K562 (cell line): ENCODE measurements at regions of chr6 and their contacts with region 1.

Region 1: GRCh38 chr6:118565311-118565960 is 17.3 kb downstream of the PLN start:
- DNase-seq: peak; percentile 16 to 44 (median 18)
- ATAC-seq: peak; percentile 90
- H3K4me3 ChIP-seq: no peak overlapping the region
- H3K27ac ChIP-seq: no peak overlapping the region
- H3K4me1 ChIP-seq: no peaks in the 10 kb centered on the region; a peak in 1 of 5 replicates
- H3K27me3 ChIP-seq: no peaks in the 10 kb centered on the region
- CTCF ChIP-seq: peak in 2 of 3 experiments; percentile 55 to 66; a peak in 4 of 6 replicates
- EP300 ChIP-seq: no peak
- POLR2A ChIP-seq: no peak
- RAD21 ChIP-seq: peak; percentile 47 to 87; a peak in 3 of 4 replicates

Region 2: GRCh38 chr6:118495485-118496280 is 69.8 kb before region 1 on chr6:
- CTCF ChIA-PET with region 1: no interaction called
- POLR2A ChIA-PET with region 1: no interaction called
- in situ Hi-C with region 1: no loop called
- intact Hi-C with region 1: no loop called
- DNase-seq: no peak
- ATAC-seq: no peak
- H3K4me3 ChIP-seq: no peak overlapping the region
- H3K27ac ChIP-seq: no peak overlapping the region
- H3K4me1 ChIP-seq: no peaks in the 10 kb centered on the region
- H3K27me3 ChIP-seq: no peaks in the 10 kb centered on the region
- CTCF ChIP-seq: no peak
- EP300 ChIP-seq: no peak
- POLR2A ChIP-seq: no peak
- RAD21 ChIP-seq: no peak

Region 3: DNA sequence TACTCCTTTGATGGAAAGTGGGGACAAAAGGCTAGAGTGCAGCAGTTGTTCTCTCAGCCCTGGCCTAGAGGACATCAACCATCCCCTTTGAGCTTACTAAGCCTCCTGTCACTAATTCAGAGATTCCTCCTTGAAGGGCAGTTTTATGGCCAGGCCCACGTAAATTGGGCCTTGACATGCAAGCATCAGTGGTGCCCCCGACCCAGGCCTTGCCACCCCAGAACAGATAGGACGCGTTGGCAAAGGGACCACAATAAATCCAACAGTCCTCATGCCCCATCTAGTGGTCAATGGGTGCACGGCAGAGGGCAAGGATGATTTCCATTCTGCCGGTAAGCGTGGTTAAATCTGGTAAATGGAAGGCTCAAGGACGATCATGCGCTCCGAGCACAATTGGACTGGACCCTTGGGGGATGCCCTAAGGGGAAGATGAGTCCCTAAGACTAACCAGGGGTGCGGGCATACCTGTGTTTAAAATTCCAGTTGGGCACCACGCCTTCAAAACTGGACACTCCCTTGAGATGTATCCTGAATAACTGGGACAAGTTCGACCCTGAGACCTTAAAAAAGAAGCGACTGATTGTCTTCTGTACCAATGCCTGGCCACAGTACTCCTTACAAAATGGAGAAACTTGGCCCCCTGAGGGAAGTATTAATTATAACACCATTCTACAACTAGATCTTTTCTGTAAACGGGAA is 53.4 kb after region 1 on chr6:
- CTCF ChIA-PET with region 1: no interaction called
- POLR2A ChIA-PET with region 1: no interaction called
- in situ Hi-C with region 1: no loop called
- intact Hi-C with region 1: loop called (anchors 1 kb)
- DNase-seq: peak; percentile 32 to 59 (median 39)
- ATAC-seq: peak; percentile 90
- H3K4me3 ChIP-seq: no peak overlapping the region
- H3K27ac ChIP-seq: no peak overlapping the region
- H3K4me1 ChIP-seq: peaks cover 0 to 7% of the 10 kb centered on the region in 2 experiments; a peak in 3 of 5 replicates
- H3K27me3 ChIP-seq: no peaks in the 10 kb centered on the region
- CTCF ChIP-seq: peak; percentile 80 to 92 (median 80)
- EP300 ChIP-seq: no peak
- POLR2A ChIP-seq: no peak
- RAD21 ChIP-seq: peak; percentile 75 to 82

Region 4: GRCh38 chr6:118724211-118724610 is 158.8 kb after region 1 on chr6:
- CTCF ChIA-PET with region 1: no interaction called
- POLR2A ChIA-PET with region 1: no interaction called
- in situ Hi-C with region 1: no loop called
- intact Hi-C with region 1: no loop called
- DNase-seq: no peak
- ATAC-seq: peak; percentile 54
- H3K4me3 ChIP-seq: no peak overlapping the region
- H3K27ac ChIP-seq: no peak overlapping the region
- H3K4me1 ChIP-seq: peaks cover 0 to 4% of the 10 kb centered on the region in 2 experiments; a peak in 3 of 5 replicates
- H3K27me3 ChIP-seq: no peaks in the 10 kb centered on the region
- CTCF ChIP-seq: no peak
- EP300 ChIP-seq: no peak
- POLR2A ChIP-seq: no peak
- RAD21 ChIP-seq: no peak

Region 5: DNA sequence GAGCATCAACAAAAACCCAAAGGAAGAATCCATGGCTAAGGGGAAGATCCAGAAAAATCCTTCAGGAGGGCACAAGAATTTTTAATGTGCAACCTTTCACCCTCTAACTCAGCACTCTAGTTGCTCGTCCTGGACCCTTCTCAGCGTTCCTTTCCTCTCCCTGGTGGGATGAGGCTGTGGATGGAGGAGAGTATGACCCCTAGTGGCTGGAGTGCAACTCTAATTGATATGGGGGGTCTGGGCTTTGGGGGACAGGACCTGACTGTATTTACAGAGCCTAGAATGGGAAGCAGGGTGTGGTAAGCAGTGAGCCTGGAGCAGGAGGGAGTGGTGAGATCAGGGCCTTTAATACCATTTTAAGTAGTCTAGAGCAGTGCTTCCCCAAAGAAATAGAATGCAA is 169.9 kb after region 1 on chr6:
- CTCF ChIA-PET with region 1: no interaction called
- POLR2A ChIA-PET with region 1: no interaction called
- in situ Hi-C with region 1: no loop called
- intact Hi-C with region 1: loop called (anchors 5 kb)
- DNase-seq: peak; percentile 50 to 62 (median 56)
- ATAC-seq: peak; percentile 72
- H3K4me3 ChIP-seq: no peak overlapping the region
- H3K27ac ChIP-seq: no peak overlapping the region
- H3K4me1 ChIP-seq: peaks cover 6 to 19% of the 10 kb centered on the region in 2 experiments; a peak in 3 of 5 replicates
- H3K27me3 ChIP-seq: no peaks in the 10 kb centered on the region
- CTCF ChIP-seq: peak; percentile 56 to 69 (median 59)
- EP300 ChIP-seq: no peak
- POLR2A ChIP-seq: no peak
- RAD21 ChIP-seq: peak; percentile 12 to 62; a peak in 2 of 4 replicates

Region 6: GRCh38 chr6:118776607-118777549 is 211.4 kb after region 1 on chr6:
- CTCF ChIA-PET with region 1: interaction called, 12 read pairs
- POLR2A ChIA-PET with region 1: no interaction called
- in situ Hi-C with region 1: no loop called
- intact Hi-C with region 1: loop called (anchors 1 kb)
- DNase-seq: peak; percentile 60 to 74 (median 62)
- ATAC-seq: peak; percentile 87
- H3K4me3 ChIP-seq: no peak overlapping the region
- H3K27ac ChIP-seq: no peak overlapping the region
- H3K4me1 ChIP-seq: peaks cover 0 to 3% of the 10 kb centered on the region in 2 experiments; a peak in 1 of 5 replicates
- H3K27me3 ChIP-seq: peaks cover 13 to 16% of the 10 kb centered on the region in 2 experiments; a peak in 4 of 5 replicates
- CTCF ChIP-seq: peak; percentile 64 to 85 (median 67); a peak in 5 of 6 replicates
- EP300 ChIP-seq: no peak
- POLR2A ChIP-seq: no peak
- RAD21 ChIP-seq: peak; percentile 82 to 88

Region 7: DNA sequence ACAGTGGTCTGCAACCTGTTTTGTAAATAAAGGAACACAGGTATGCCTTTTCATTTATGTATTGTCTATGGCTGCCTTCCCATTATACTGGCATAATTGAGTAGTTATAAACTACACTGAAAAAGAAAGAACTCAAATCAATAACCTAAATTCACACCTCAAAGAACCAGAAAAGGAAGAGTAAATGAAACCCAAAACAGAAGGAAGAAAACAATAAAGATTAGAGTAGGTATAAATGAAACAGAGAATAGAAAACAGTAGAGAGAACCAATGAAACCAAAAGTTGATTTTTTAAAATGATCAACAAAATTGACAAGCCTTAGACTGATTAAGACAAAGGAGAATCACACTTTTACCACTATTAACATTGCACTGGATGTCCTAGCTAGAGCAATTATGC is 478.3 kb after region 1 on chr6:
- CTCF ChIA-PET with region 1: no interaction called
- POLR2A ChIA-PET with region 1: no interaction called
- in situ Hi-C with region 1: no loop called
- intact Hi-C with region 1: no loop called
- DNase-seq: no peak
- ATAC-seq: no peak
- H3K4me3 ChIP-seq: no peak overlapping the region
- H3K27ac ChIP-seq: no peak overlapping the region
- H3K4me1 ChIP-seq: peaks cover 0 to 2% of the 10 kb centered on the region in 2 experiments; a peak in 2 of 5 replicates
- H3K27me3 ChIP-seq: no peaks in the 10 kb centered on the region
- CTCF ChIP-seq: no peak
- EP300 ChIP-seq: no peak
- POLR2A ChIP-seq: no peak
- RAD21 ChIP-seq: no peak